A549 (cell line): ENCODE measurements at regions of chr10 and their contacts with region 1.

Region 1: DNA sequence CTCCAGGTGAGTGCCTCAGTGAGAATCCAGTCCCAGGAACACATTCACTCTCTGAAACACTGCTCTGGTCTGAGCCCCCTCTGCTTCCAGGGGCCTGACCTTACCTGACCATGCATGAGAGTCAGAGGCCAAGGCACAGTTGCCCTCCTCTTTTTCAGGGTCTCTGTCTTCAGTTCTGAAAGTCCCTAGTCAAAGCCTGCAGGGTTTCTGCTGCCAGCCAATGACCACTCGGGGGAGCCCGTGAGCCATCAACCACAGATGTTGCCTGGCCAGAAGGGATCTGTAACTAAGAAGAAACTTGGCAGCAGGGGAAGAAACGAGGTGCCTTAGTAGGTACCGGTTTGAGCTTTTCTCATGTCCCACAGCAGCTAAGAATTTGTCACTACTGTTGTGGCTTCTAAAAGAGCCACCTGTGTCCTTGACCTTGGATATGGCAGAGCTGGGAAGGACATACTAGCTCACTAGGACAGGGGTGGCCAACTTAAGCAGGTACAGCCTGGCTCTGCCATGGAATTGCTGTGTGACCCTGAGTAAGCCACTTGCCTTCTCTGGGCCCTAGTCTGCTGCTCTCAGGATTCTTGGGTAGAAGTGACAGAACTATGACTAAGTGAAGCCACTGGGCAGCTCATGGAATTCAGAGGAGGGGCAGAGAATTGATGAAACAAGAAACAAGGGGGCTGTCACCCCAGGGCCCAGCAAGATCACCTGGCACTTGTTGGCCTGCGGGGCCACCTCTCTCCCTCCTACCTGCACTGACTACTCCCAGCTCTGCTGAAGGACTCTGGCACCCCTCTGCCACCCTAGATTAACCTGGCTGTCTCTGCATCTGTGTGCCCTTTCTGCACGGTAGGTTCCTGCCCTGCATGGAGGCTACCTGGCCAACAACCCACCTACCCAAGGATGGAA is 83.8 kb upstream of the GPR26 start:
- DNase-seq: peak; percentile 64 to 75
- ATAC-seq: peak; percentile 72 to 92
- H3K4me3 ChIP-seq: no peak overlapping the region
- H3K27ac ChIP-seq: no peak overlapping the region
- H3K4me1 ChIP-seq: no peaks in the 10 kb centered on the region
- CTCF ChIP-seq: peak; percentile 82
- EP300 ChIP-seq: no peak
- POLR2A ChIP-seq: no peak
- RAD21 ChIP-seq: peak; percentile 86 to 88

Region 2: GRCh38 chr10:123154092-123154921 is 428.0 kb before region 1 on chr10 and contains the start of gene BUB3:
- CTCF ChIA-PET with region 1: no interaction called
- POLR2A ChIA-PET with region 1: no interaction called
- DNase-seq: peak; percentile 99
- ATAC-seq: peak; percentile 98 to 99
- H3K4me3 ChIP-seq: peak within 1 kb of the TSS; percentile 85
- H3K27ac ChIP-seq: peak within 1 kb of the TSS; percentile 96 to 98
- H3K4me1 ChIP-seq: peaks cover 40% of the 10 kb centered on the region
- CTCF ChIP-seq: no peak
- EP300 ChIP-seq: no peak
- POLR2A ChIP-seq: peak; percentile 86
- RAD21 ChIP-seq: no peak
- polyA plus RNA-seq, gene BUB3: 229 and 246 TPM in 2 replicates

Region 3: DNA sequence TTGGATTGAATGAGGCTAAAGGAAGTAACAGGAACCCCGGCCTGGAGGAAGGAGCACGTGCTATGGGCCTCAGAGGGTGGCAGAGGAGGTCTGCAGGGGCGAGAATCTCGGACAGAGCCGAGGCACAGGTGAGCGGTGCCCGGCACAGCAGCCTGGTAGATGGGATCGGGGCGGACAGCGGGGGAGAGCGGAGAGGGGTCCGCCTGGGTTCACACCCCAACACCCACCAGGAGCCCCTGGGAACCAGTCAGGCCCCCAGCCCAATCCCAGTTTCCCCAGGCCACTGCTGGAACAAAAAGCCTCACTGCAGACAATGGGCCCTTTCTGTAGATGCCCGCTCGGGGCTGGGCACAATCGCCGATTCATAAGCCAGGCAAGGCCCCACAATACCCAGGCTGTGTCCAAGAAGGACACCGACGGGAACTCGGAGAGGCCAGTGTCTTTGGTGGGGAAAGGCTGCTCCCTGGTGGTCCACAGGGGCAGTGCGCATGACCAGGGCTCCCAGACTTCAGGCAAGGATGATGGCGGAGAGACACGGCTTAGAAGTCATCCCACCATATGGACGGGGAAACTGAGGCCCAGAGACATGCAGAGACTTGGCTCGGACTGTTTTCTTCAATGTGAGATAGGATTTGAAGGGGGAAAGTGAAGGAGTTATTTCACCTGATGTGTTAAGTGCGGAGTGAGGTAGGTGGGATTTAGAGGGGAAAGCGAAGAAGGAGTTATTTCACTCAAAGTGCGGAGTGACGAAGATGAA is 23.1 kb before region 1 on chr10:
- CTCF ChIA-PET with region 1: interaction called, 29 read pairs
- POLR2A ChIA-PET with region 1: no interaction called
- DNase-seq: peak; percentile 60 to 88
- ATAC-seq: peak; percentile 87 to 96
- H3K4me3 ChIP-seq: no peak overlapping the region
- H3K27ac ChIP-seq: no peak overlapping the region
- H3K4me1 ChIP-seq: no peaks in the 10 kb centered on the region
- CTCF ChIP-seq: peak; percentile 86
- EP300 ChIP-seq: no peak
- POLR2A ChIP-seq: no peak
- RAD21 ChIP-seq: peak; percentile 95 to 96

Region 4: DNA sequence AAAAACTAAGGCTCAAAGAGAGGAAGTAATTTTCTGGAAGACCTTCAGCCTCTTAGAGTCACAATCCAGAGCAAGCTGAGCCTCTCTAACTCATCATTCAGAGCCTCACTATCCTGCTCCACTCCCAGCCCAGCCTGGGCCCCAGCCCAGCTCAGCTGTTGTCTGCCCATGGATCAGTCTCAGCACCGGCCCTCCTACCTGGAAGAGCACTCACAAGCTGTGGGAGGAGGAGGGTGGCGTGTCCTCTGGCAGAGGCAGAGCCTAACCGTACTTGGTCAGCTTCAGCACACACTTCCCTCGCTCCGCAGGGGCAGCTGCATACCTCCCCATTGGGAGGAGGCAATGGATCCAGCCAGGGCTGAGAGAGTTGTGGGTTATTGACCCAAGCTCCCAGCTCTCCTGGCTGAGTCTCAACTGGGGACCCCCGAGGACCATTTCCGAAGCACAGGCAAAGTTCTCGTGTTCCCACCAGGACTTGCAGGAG is 17.1 kb after region 1 on chr10:
- CTCF ChIA-PET with region 1: interaction called, 32 read pairs
- POLR2A ChIA-PET with region 1: no interaction called
- DNase-seq: no peak
- ATAC-seq: no peak
- H3K4me3 ChIP-seq: no peak overlapping the region
- H3K27ac ChIP-seq: no peak overlapping the region
- H3K4me1 ChIP-seq: no peaks in the 10 kb centered on the region
- CTCF ChIP-seq: no peak
- EP300 ChIP-seq: no peak
- POLR2A ChIP-seq: no peak
- RAD21 ChIP-seq: no peak

Region 5: GRCh38 chr10:123604506-123604905 is 22.2 kb after region 1 on chr10:
- CTCF ChIA-PET with region 1: interaction called, 32 read pairs
- POLR2A ChIA-PET with region 1: no interaction called
- DNase-seq: no peak
- ATAC-seq: no peak
- H3K4me3 ChIP-seq: no peak overlapping the region
- H3K27ac ChIP-seq: no peak overlapping the region
- H3K4me1 ChIP-seq: no peaks in the 10 kb centered on the region
- CTCF ChIP-seq: no peak
- EP300 ChIP-seq: no peak
- POLR2A ChIP-seq: no peak
- RAD21 ChIP-seq: no peak

Region 6: GRCh38 chr10:123614888-123615287 is 32.6 kb after region 1 on chr10:
- CTCF ChIA-PET with region 1: interaction called, 30 read pairs
- POLR2A ChIA-PET with region 1: no interaction called
- DNase-seq: peak; percentile 15 to 20
- ATAC-seq: peak in 1 of 2 experiments; percentile 60; a peak in 3 of 6 replicates
- H3K4me3 ChIP-seq: no peak overlapping the region
- H3K27ac ChIP-seq: no peak overlapping the region
- H3K4me1 ChIP-seq: no peaks in the 10 kb centered on the region
- CTCF ChIP-seq: no peak
- EP300 ChIP-seq: no peak
- POLR2A ChIP-seq: no peak
- RAD21 ChIP-seq: no peak

Region 7: GRCh38 chr10:123967396-123968243 is 385.3 kb after region 1 on chr10:
- CTCF ChIA-PET with region 1: interaction called, 305 read pairs
- POLR2A ChIA-PET with region 1: no interaction called
- DNase-seq: peak; percentile 58 to 84
- ATAC-seq: peak; percentile 76 to 93; a peak in 4 of 6 replicates
- H3K4me3 ChIP-seq: no peak overlapping the region
- H3K27ac ChIP-seq: no peak overlapping the region
- H3K4me1 ChIP-seq: no peaks in the 10 kb centered on the region
- CTCF ChIP-seq: peak; percentile 90
- EP300 ChIP-seq: no peak
- POLR2A ChIP-seq: no peak
- RAD21 ChIP-seq: peak; percentile 97

Region 8: DNA sequence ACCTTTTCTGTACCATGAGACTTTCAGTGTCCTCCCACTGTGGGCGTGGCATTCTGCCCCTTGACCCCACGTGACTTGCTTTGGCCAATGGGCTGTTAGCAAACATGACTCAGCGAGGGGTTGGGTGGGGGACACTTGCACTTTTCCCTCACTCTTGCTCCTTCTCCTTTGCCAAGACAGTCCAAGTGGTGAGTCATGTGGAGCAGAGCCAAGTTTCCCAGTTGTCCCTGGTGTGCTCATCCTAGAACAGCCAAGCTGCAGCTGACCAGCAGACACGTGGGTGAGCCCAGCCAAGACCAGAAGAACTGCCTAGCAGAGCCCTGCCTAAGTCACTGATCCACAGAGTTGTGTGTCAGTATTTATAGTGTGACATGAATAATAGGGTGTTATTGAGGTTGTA is 392.1 kb after region 1 on chr10:
- CTCF ChIA-PET with region 1: interaction called, 305 read pairs
- POLR2A ChIA-PET with region 1: no interaction called
- DNase-seq: peak in 1 of 2 experiments; percentile 79
- ATAC-seq: peak; percentile 58 to 75; a peak in 4 of 6 replicates
- H3K4me3 ChIP-seq: no peak overlapping the region
- H3K27ac ChIP-seq: no peak overlapping the region
- H3K4me1 ChIP-seq: no peaks in the 10 kb centered on the region
- CTCF ChIP-seq: no peak
- EP300 ChIP-seq: no peak
- POLR2A ChIP-seq: no peak
- RAD21 ChIP-seq: no peak

Region 9: GRCh38 chr10:124180947-124181549 is 598.7 kb after region 1 on chr10:
- CTCF ChIA-PET with region 1: no interaction called
- POLR2A ChIA-PET with region 1: no interaction called
- DNase-seq: no peak
- ATAC-seq: no peak
- H3K4me3 ChIP-seq: no peak overlapping the region
- H3K27ac ChIP-seq: no peak overlapping the region
- H3K4me1 ChIP-seq: no peaks in the 10 kb centered on the region
- CTCF ChIP-seq: no peak
- EP300 ChIP-seq: no peak
- POLR2A ChIP-seq: no peak
- RAD21 ChIP-seq: no peak